Heart left ventricle (tissue), 16 donors: ENCODE measurements at regions of chr6 and their contacts with region 1.

Region 1: DNA sequence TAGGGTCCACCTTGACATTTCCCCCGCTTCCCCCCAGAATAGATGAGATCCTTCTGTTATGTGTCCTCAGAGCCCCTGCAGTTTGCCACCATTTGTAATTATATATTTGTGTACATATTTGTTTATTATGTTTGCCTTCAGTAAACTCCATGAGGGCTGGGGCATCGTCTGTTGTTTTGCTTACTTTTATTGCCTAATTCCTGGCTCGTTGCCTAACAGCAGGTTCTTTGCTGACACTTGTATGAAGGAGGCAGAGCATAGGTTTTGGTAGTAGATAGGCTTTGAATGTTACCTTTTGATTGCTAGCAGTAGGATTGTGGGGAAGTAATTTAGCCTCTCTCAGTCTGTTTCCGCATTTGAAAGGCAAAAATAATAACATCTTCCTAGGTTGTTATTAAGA is 9.9 kb downstream of the MAP3K4 start:
- DNase-seq: no peak
- ATAC-seq: no peak
- H3K4me3 ChIP-seq: no peak overlapping the region
- H3K27ac ChIP-seq: no peak overlapping the region
- H3K4me1 ChIP-seq: peaks cover 0 to 36% (median 17%) of the 10 kb centered on the region in 12 donors
- H3K27me3 ChIP-seq: no peaks in the 10 kb centered on the region
- CTCF ChIP-seq: no peak
- POLR2A ChIP-seq: no peak

Region 2: GRCh38 chr6:160912411-160912810 is 89.0 kb before region 1 on chr6:
- intact Hi-C with region 1: no loop called
- DNase-seq: no peak
- ATAC-seq: no peak
- H3K4me3 ChIP-seq: no peak overlapping the region
- H3K27ac ChIP-seq: no peak overlapping the region
- H3K4me1 ChIP-seq: no peaks in the 10 kb centered on the region
- H3K27me3 ChIP-seq: no peaks in the 10 kb centered on the region
- CTCF ChIP-seq: no peak
- POLR2A ChIP-seq: no peak

Region 3: DNA sequence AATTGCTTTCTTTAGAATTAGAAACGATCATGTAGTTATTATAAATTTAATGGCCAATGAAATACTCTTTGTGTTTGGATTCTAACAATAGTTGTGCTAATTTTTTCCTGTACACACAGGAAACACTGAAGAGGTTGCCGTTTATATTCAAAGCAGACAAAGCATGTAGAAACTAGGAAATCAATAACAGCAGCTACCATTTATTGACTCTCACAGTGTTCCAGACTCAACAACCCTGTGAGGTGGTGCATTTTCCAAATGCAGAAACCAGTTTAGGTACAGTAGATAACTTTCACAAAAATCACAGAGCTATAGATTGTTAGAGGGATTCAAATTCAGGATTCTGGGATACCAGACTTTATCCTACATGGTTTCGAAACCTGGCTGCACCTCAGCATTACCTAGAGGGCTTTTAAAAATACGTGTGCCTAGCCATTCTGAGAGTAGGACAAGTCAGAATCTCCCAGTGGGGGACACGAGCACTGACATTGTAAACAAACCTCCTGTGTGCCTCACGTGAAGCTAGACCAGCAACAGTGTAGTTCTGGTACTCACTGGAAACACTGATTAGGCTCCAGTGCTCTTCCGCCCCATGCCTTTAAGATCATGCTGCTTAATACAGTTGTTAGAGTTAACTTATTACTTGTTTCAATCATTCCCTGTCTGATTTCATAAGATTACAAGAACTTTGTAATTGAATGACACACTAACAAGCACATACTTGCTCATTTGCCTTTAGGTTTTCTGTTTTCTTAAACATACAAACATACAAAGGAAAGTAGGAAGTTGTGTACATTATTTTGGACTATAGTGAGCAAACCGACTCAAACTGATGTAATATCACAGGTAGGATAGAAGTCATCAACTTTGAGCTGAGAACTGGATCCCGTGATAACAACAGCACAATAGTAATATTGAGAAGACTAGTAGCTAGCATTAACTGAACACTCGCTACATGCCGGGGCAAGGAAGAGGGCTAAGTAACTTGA is 56.0 kb after region 1 on chr6:
- intact Hi-C with region 1: loop called in 2 of 10 experiments (anchors 2 to 10 kb)
- DNase-seq: no peak
- ATAC-seq: peak in 2 of 4 donors; percentile 42 to 57
- H3K4me3 ChIP-seq: no peak overlapping the region
- H3K27ac ChIP-seq: no peak overlapping the region
- H3K4me1 ChIP-seq: peaks cover 0 to 12% (median 0%) of the 10 kb centered on the region in 12 donors
- H3K27me3 ChIP-seq: no peaks in the 10 kb centered on the region
- CTCF ChIP-seq: no peak
- POLR2A ChIP-seq: no peak